IMR-90 (cell line): ENCODE measurements at regions of chrX and their contacts with region 1.

Region 1: GRCh38 chrX:119516157-119516702 is 48.0 kb downstream of the SLC25A5 start:
- DNase-seq: peak; percentile 69
- ATAC-seq: peak; percentile 91
- H3K4me3 ChIP-seq: no peak overlapping the region
- H3K27ac ChIP-seq: no peak overlapping the region
- H3K4me1 ChIP-seq: no peaks in the 10 kb centered on the region
- H3K27me3 ChIP-seq: no peaks in the 10 kb centered on the region
- CTCF ChIP-seq: peak; percentile 82
- POLR2A ChIP-seq: no peak
- RAD21 ChIP-seq: peak; percentile 85

Region 2: GRCh38 chrX:118823263-118824172 is 692.7 kb before region 1 on chrX and contains the start of gene ZCCHC12:
- CTCF ChIA-PET with region 1: no interaction called
- POLR2A ChIA-PET with region 1: no interaction called
- dilution Hi-C with region 1: no loop called
- in situ Hi-C with region 1: no loop called
- intact Hi-C with region 1: no loop called
- DNase-seq: peak; percentile 37
- ATAC-seq: peak; percentile 88
- H3K4me3 ChIP-seq: no peak within 1 kb of the TSS
- H3K27ac ChIP-seq: no peak within 1 kb of the TSS
- H3K4me1 ChIP-seq: no peaks in the 10 kb centered on the region
- H3K27me3 ChIP-seq: peaks cover 44% of the 10 kb centered on the region
- CTCF ChIP-seq: no peak
- POLR2A ChIP-seq: no peak
- RAD21 ChIP-seq: no peak
- total RNA-seq, gene ZCCHC12: under 0.01 TPM in 1 of 2 replicates, not detected in the other

Region 3: DNA sequence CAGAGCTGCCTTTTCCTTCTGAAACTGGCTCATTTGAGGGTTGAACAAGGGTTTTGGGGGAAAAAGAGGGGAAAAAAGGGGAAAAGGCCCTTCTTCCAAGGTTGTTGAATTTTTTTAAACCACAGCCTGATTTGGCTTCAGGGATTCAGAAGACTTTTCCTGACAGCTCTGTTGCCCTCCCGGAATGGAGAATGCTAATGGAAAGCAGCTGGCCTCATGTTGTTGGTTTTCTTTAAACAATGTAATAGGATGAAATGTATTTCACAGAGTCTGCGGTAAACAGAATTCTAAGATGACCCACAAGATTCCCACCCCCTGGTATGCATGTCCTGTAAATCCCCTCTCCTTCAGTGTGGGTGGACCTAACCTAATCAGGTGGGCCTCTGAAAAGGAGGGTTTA is 385.3 kb before region 1 on chrX:
- CTCF ChIA-PET with region 1: no interaction called
- POLR2A ChIA-PET with region 1: no interaction called
- dilution Hi-C with region 1: no loop called
- in situ Hi-C with region 1: no loop called
- intact Hi-C with region 1: no loop called
- DNase-seq: no peak
- ATAC-seq: no peak
- H3K4me3 ChIP-seq: no peak overlapping the region
- H3K27ac ChIP-seq: no peak overlapping the region
- H3K4me1 ChIP-seq: no peaks in the 10 kb centered on the region
- H3K27me3 ChIP-seq: peaks cover 7% of the 10 kb centered on the region
- CTCF ChIP-seq: no peak
- POLR2A ChIP-seq: no peak
- RAD21 ChIP-seq: no peak

Region 4: DNA sequence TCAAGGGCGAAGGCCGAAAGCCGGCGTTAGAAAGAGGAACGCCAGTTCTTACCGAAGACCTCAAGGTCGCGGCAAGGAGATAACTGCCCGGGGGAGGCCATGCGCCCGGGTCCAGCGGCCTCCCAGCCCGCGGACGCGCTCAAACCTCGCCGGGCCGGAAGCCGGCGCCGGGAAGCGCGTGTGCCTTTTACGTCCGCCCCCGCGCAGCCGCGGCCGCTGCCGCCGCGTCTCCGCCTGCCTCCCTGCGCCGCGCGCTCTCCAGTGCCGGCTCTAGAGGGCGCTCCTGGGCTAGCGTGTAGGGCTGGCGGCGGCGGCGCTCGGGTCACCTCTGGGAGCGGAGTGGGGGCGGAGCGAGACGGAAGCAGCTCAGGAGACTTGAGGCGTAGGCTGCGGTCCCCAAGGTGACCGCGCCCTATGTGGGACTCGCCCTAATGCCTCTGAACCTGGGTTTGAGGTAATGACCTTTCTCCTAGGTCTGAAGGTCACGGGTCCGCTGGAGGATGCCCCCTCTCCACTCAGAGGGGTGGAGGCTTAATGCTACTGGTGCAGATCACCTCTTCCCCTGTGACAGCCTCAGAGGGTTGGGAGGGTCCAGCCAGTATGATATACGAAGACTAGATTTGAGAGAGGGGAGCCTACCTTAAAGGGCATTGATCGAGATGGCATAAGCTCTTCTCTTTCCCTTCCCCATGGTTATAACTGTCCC is 47.1 kb before region 1 on chrX:
- CTCF ChIA-PET with region 1: no interaction called
- POLR2A ChIA-PET with region 1: no interaction called
- dilution Hi-C with region 1: no loop called
- in situ Hi-C with region 1: no loop called
- intact Hi-C with region 1: loop called (anchors 1 kb)
- DNase-seq: peak; percentile 71
- ATAC-seq: peak; percentile 80
- H3K4me3 ChIP-seq: peak overlapping the region; percentile 97
- H3K27ac ChIP-seq: peak overlapping the region; percentile 86
- H3K4me1 ChIP-seq: no peaks in the 10 kb centered on the region
- H3K27me3 ChIP-seq: no peaks in the 10 kb centered on the region
- CTCF ChIP-seq: peak; percentile 78
- POLR2A ChIP-seq: peak; percentile 14; the same call in 1 of the 2 replicates
- RAD21 ChIP-seq: peak; percentile 56

Region 5: DNA sequence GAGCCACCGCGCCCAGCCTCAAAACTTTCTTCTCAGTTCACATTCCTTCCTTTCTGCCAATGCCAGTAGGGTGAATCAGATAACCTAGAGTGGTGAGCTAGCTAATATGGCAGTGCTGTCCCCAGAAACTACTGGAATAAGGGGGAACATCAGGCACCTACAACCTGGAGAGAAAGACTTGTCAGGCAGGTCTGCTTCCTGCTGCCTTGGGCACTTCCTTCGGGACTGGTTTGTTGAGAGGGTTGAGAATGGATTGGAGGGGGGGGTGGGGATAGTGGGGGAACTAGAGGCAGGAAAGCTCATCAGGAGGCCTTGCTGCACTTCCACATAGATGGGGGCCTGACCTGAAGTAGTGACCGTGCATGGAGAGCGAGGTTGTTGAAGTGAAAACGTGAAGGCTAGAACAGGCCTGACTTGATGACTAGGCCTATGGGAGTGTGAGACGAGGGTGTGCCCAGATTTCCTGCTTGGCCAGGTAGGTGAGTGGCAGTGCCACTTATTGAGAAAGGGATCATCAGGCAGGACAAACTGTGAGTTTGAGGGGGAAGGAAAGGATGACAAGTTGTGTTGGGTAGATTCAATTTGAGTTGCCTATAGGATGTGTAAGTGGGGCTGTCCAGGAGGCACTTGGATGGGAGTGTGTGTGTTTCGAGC is 14.6 kb before region 1 on chrX:
- CTCF ChIA-PET with region 1: interaction called, 10 read pairs
- POLR2A ChIA-PET with region 1: no interaction called
- dilution Hi-C with region 1: no loop called
- in situ Hi-C with region 1: no loop called
- intact Hi-C with region 1: no loop called
- DNase-seq: no peak
- ATAC-seq: no peak
- H3K4me3 ChIP-seq: no peak overlapping the region
- H3K27ac ChIP-seq: no peak overlapping the region
- H3K4me1 ChIP-seq: peaks cover 7% of the 10 kb centered on the region
- H3K27me3 ChIP-seq: no peaks in the 10 kb centered on the region
- CTCF ChIP-seq: no peak
- POLR2A ChIP-seq: no peak
- RAD21 ChIP-seq: no peak

Region 6: DNA sequence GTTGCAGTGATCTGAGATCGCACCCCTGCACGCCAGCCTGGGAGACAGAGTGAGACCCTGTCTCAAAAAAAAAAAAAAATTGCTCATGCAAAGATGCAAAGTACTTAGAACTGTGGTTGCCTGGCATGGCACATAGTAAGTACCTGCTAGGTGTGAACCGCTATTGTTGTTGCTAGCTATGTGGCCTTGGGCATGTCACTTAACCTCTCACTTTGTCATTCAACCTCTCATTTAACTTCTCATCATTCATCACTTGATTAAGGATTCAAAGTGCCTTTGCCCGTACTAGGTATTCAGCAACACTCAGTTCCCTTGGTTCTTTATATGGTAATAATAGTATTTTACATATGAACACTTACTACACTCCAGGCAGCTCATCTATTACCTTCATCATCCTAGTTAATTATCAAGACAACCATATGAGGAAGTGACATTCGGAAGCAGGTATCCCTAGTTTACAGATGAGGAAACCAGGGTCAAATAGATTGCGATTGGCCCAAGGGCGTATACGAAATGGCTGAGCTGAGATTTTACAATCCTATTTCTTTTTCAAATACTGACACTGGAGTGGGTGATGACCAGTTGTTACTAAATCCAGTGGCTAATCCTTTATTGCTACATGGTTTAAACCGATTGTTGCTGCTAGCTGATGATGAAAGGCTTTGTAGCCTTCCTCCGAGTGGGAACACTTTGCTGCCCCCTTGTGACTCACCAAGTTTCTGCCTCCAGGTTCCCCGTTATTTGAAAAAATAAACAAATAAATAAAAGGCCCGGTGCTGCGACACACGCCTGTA is 213.4 kb after region 1 on chrX:
- CTCF ChIA-PET with region 1: interaction called, 3 read pairs
- POLR2A ChIA-PET with region 1: no interaction called
- dilution Hi-C with region 1: no loop called
- in situ Hi-C with region 1: loop called (anchors 25 kb)
- intact Hi-C with region 1: loop called (anchors 1 kb)
- DNase-seq: peak; percentile 64
- ATAC-seq: peak; percentile 70
- H3K4me3 ChIP-seq: no peak overlapping the region
- H3K27ac ChIP-seq: no peak overlapping the region
- H3K4me1 ChIP-seq: no peaks in the 10 kb centered on the region; the same call in 1 of the 2 replicates
- H3K27me3 ChIP-seq: no peaks in the 10 kb centered on the region; the same call in 1 of the 2 replicates
- CTCF ChIP-seq: peak; percentile 65
- POLR2A ChIP-seq: no peak
- RAD21 ChIP-seq: peak; percentile 72

Region 7: DNA sequence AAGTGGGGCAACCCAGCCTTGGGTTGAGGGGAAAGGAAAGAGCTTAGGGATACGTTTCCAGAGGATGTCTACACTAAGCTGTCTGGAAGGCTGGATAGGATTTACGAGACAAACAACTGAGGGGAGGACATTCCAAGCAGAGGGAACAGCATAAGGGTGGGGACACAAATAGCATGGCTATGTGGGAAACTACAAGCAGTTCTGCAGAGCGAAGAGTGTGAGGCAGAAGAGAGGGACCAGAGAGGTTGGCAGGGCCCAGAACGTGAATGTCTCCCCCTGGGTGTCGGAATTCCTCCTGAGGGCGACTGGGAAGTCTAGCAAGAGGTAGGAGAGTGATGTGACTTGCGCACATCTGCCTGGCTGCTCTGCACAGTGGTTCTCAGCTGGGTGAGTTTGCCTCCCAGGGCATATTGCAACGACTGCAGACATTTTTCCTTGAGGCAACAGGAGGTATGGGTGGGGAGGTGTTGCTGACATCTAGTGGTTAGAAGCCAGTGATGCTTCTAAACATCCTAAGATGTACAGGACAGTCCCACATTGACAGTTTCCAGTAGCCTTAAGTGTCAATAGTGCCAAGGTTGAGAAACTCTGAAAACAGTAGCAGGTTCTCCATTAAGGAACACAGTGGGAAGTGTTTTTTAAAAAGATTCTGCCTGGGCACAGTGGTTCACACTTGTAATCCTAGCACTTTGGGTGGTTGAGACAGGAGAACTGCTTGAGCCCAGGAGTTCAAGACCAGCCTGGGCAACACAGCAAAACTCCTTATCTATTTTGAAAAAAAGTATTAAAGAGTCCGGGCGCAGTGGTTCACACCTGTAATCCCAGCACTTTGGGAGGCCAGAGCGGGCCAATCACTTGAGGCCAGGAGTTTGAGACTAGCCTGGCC is 364.6 kb after region 1 on chrX:
- CTCF ChIA-PET with region 1: no interaction called
- POLR2A ChIA-PET with region 1: no interaction called
- dilution Hi-C with region 1: no loop called
- in situ Hi-C with region 1: no loop called
- intact Hi-C with region 1: loop called (anchors 10 kb)
- DNase-seq: peak; percentile 63
- ATAC-seq: peak; percentile 95
- H3K4me3 ChIP-seq: no peak overlapping the region
- H3K27ac ChIP-seq: no peak overlapping the region
- H3K4me1 ChIP-seq: no peaks in the 10 kb centered on the region
- H3K27me3 ChIP-seq: no peaks in the 10 kb centered on the region
- CTCF ChIP-seq: peak; percentile 62
- POLR2A ChIP-seq: no peak
- RAD21 ChIP-seq: peak; percentile 61